Activated naive CD4-positive, alpha-beta T cell treated with anti-CD3 and anti-CD28 coated beads for 36 hours (primary cell): ENCODE measurements at regions of chr12 and their contacts with region 1.

Region 1: GRCh38 chr12:546921-547845 is 87.4 kb downstream of the B4GALNT3 start:
- DNase-seq: peak; percentile 73
- H3K4me3 Mint-ChIP-seq: no peak overlapping the region
- H3K27ac Mint-ChIP-seq: no peak overlapping the region
- H3K4me1 Mint-ChIP-seq: peaks cover 13% of the 10 kb centered on the region
- H3K27me3 Mint-ChIP-seq: peaks cover 11% of the 10 kb centered on the region

Region 2: DNA sequence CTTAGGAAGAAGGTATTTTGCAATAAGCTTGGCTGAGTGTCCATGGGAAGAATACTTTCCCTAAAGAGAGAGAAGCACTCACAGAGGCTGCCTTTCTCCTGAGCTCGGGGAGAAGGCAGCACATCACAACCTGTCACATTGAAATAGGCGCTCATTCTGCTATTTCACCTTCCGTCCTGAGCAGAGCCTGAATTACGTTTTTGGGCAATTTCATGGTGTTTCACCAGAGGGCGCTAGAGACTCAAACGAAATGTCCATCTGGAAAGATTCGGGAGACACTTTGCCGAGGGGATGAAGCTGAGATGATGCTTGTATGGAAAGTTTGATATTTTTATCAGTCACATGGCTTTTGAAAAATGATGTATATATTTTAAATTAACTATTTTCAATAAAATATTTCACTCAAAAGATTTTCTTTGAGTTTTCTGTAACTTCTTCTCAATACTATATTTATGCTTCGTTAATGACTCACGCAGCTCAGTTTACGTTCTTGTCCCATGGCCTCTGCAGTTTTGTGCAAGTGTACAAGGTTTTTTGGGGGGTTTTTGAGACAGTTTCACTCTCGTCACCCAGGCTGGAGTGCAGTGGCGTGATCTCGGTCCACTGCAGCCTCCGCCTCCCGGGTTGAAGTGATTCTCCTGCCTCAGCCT is 104.8 kb before region 1 on chr12:
- CTCF ChIA-PET with region 1: interaction called, 11 read pairs
- intact Hi-C with region 1: loop called (anchors 2 kb)
- DNase-seq: peak; percentile 64
- H3K4me3 Mint-ChIP-seq: no peak overlapping the region
- H3K27ac Mint-ChIP-seq: no peak overlapping the region
- H3K4me1 Mint-ChIP-seq: no peaks in the 10 kb centered on the region
- H3K27me3 Mint-ChIP-seq: no peaks in the 10 kb centered on the region

Region 3: GRCh38 chr12:459430-460258 is 87.5 kb before region 1 on chr12 and contains the start of gene B4GALNT3:
- CTCF ChIA-PET with region 1: interaction called, 70 read pairs
- intact Hi-C with region 1: loop called (anchors 1 kb)
- DNase-seq: peak; percentile 25
- H3K4me3 Mint-ChIP-seq: peak within 1 kb of the TSS; percentile 66
- H3K27ac Mint-ChIP-seq: no peak within 1 kb of the TSS
- H3K4me1 Mint-ChIP-seq: peaks cover 11% of the 10 kb centered on the region
- H3K27me3 Mint-ChIP-seq: peaks cover 22% of the 10 kb centered on the region
- total RNA-seq, gene B4GALNT3: 1.1 to 1.2 TPM